ENCODE measurements at regions of chr14 and their contacts with region 1.

Region 1: DNA sequence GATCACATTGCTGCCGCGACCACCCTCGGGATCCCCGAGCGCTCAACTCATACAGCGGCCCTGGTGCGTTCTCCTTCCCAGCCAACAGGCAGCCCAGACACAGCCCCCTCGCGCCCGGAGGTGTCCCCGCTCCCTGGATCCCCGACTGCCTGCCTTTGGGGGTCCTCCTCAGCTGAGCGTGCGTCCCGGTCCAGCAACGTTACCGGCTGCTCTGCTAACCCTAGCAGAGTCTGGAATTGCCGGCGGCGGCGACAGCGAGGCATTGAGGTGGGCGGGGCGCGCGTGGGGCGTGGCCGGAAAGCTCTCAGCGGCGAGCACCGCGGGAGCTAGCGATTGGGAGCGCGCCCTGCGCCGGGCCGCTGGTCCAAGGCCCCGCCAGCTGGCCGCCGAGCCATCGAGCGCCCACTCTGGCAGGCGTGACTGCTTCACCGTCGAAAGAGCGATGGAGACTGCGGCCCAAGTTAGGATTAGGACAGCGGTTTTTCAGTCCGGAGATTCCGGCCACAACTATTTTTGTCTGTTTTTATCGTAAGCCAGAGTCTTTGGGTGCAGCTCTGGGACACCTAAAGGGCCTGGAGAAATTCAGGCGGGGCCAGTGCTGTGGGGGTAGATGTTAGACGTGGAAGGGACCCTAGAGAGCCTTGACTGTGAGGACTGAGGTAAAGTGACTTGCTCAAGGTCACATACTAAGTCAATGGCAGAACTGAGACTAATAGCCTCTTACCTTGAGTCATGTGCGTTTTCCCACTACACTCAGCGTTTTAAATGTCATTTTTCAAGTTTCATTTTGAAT is at the start of gene HEATR5A:
- DNase-seq: peak; percentile 95
- H3K4me3 ChIP-seq: peak within 1 kb of the TSS; percentile 82 to 92
- H3K27ac ChIP-seq: peak within 1 kb of the TSS; percentile 74 to 83
- H3K4me1 ChIP-seq: no peaks in the 10 kb centered on the region; a peak in 1 of 4 replicates
- H3K27me3 ChIP-seq: no peaks in the 10 kb centered on the region
- CTCF ChIP-seq: peak; percentile 20; the same call in 1 of the 2 replicates
- EP300 ChIP-seq: 0 out of 4 replicates have a peak, but pooled peaks of 1 of the 2 experiments have one; percentile 14
- RAD21 ChIP-seq: no peak
- polyA plus RNA-seq, gene HEATR5A: 7.1 and 12.9 TPM in 2 replicates

Region 2: DNA sequence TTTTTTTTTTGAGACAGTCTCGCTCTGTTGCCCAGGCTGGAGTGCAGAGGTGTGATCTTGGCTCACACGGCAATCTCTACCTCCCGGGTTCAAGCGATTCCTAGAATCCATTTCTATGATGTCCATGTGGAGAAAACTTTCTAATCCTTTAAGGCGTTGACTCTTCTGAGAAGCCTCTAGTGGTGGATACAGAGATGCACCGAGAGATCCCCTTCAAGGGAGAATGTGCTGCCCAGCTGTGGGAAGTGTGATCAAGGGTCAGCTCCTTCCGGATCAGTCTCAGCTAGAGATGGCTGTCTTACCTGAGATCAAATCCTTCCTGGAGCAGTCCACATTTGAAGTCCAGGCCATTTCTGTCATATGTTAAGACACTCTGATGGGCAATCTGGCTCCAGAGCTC is 120.2 kb before region 1 on chr14:
- CTCF ChIA-PET with region 1: no interaction called
- POLR2A ChIA-PET with region 1: no interaction called
- DNase-seq: no peak
- H3K4me3 ChIP-seq: no peak overlapping the region
- H3K27ac ChIP-seq: no peak overlapping the region
- H3K4me1 ChIP-seq: peaks cover 0 to under 1% of the 10 kb centered on the region in 2 experiments; a peak in 2 of 4 replicates
- H3K27me3 ChIP-seq: no peaks in the 10 kb centered on the region
- CTCF ChIP-seq: peak; percentile 15; the same call in 1 of the 2 replicates
- EP300 ChIP-seq: no peak
- RAD21 ChIP-seq: no peak

Region 3: GRCh38 chr14:31405599-31406232 is 14.8 kb before region 1 on chr14:
- CTCF ChIA-PET with region 1: interaction called, 4 read pairs
- POLR2A ChIA-PET with region 1: interaction called, 10 read pairs
- DNase-seq: no peak
- H3K4me3 ChIP-seq: no peak overlapping the region
- H3K27ac ChIP-seq: peak overlapping the region in 1 of 2 experiments; percentile 31; a peak in 1 of 4 replicates
- H3K4me1 ChIP-seq: peaks cover 5 to 7% of the 10 kb centered on the region in 2 experiments; a peak in 3 of 4 replicates
- H3K27me3 ChIP-seq: no peaks in the 10 kb centered on the region
- CTCF ChIP-seq: no peak
- EP300 ChIP-seq: no peak
- RAD21 ChIP-seq: no peak

Region 4: GRCh38 chr14:31456841-31457664 is 36.5 kb after region 1 on chr14 and contains the start of gene DTD2:
- CTCF ChIA-PET with region 1: interaction called, 5 read pairs
- POLR2A ChIA-PET with region 1: interaction called, 15 read pairs
- DNase-seq: peak; percentile 94
- H3K4me3 ChIP-seq: peak within 1 kb of the TSS; percentile 64 to 77
- H3K27ac ChIP-seq: peak within 1 kb of the TSS; percentile 77 to 92
- H3K4me1 ChIP-seq: peaks cover 12 to 13% of the 10 kb centered on the region in 2 experiments; a peak in 2 of 4 replicates
- H3K27me3 ChIP-seq: no peaks in the 10 kb centered on the region
- CTCF ChIP-seq: no peak
- EP300 ChIP-seq: no peak
- RAD21 ChIP-seq: peak; percentile 42; the same call in 1 of the 2 replicates
- polyA plus RNA-seq, gene DTD2: 10.5 and 14.7 TPM in 2 replicates